MCF 10A (cell line): ENCODE measurements at regions of chr3 and their contacts with region 1.

Region 1: DNA sequence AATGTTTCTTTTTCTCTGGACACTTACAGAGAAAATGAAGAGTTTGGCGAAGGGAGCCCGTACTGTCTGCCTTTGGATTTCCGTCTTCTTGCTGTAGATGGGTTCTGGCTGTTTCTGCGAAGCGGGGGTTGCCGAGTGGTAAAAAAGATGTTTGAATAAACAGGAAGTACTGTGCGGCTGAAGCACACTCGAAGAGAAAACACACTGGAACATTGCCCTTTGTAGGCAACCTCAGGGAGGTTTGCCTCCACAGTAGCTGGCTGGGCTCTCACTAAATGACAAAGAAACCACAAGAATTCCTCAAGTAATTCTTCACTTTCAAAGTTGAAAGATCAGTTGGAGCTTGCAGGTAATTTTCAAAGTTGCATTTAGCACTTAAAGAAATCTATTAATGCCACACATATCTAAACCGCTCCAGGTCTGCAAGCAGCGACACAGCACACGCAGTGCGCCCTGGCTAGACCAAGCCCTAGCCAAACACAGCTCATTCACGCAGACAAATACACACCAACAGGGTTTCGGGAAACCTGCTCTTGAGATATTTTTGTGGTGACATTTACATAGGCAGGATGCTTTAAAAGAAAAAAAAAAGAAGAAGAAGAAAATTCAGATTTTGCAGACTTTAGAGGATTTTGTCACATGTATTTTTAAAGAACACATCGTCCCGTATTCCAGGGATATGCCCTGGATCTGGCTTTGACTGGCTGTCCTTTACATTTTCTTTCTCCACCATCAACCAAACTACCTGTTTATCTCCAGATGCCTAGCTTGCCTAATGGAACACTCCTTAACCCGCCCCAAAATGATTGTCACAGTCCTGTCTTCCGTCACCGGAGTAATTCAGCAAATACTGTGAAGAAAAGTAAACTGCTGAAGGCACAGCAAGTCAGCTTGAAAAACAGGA is 452.8 kb downstream of the FOXP1 start:
- DNase-seq: peak; percentile 47
- H3K4me3 Mint-ChIP-seq: peak overlapping the region; percentile 78
- H3K27ac Mint-ChIP-seq: peak overlapping the region; percentile 90
- H3K4me1 Mint-ChIP-seq: peaks cover 23% of the 10 kb centered on the region
- H3K27me3 Mint-ChIP-seq: no peaks in the 10 kb centered on the region
- CTCF ChIP-seq: no peak

Region 2: GRCh38 chr3:71111784-71112440 is 18.8 kb before region 1 on chr3:
- CTCF ChIA-PET with region 1: no interaction called
- POLR2A ChIA-PET with region 1: interaction called, 3 read pairs
- intact Hi-C with region 1: loop called (anchors 1 kb)
- DNase-seq: peak; percentile 91
- H3K4me3 Mint-ChIP-seq: no peak overlapping the region
- H3K27ac Mint-ChIP-seq: peak overlapping the region; percentile 84
- H3K4me1 Mint-ChIP-seq: peaks cover 13% of the 10 kb centered on the region
- H3K27me3 Mint-ChIP-seq: no peaks in the 10 kb centered on the region
- CTCF ChIP-seq: no peak